Ascending aorta (tissue), 2 donors: ENCODE measurements at regions of chr7 and their contacts with region 1.

Region 1: DNA sequence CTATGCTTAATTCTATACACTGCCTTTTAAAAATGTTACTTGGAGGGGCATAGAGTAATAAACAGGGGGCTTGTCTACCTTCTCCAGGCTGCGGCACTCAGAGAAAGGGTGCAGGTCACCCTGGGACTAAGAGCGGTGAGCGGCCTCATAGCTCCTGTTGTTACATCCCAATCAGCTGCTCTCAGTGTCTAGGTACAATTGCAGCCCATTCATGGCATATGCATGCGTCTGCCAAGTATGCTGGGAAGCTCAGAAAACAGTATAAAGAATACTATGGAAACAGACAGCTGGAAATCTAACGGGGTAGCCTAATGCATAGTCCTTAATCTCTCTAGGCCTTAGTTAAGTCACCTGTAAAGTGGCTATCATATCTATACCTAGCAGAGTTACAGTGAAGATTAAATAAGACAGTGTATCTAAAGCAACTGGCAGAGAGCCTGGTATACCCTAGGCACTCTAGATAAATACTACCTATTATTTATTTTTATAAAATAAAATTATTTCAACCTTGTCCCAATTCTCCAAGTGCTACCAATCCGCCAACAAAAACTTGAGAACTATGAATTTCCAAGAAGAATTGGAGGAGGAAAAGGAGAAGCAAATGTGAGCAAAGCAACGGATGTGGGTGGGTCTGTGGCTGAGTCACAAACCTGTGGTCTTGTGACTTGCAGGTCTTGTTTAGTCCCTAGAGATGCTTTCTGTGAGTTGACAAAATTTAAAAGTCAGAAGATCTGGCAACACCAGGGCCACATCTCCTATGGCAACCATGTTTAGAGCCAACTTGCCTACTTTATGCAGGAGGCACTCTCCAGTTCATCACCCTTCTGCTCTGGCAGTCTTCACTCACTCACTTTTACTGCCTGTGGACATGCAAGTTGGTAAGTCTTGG is 183.0 kb downstream of the RAPGEF5 start:
- DNase-seq: no peak
- H3K4me3 ChIP-seq: no peak overlapping the region
- H3K27ac ChIP-seq: peak overlapping the region in 1 of 2 donors; percentile 68
- H3K4me1 ChIP-seq: peaks cover 0 to 12% of the 10 kb centered on the region in 2 donors
- H3K27me3 ChIP-seq: no peaks in the 10 kb centered on the region
- CTCF ChIP-seq: no peak

Region 2: GRCh38 chr7:22238354-22239311 is 64.7 kb after region 1 on chr7:
- intact Hi-C with region 1: loop called (anchors 10 kb)
- DNase-seq: no peak
- H3K4me3 ChIP-seq: no peak overlapping the region
- H3K27ac ChIP-seq: no peak overlapping the region
- H3K4me1 ChIP-seq: peaks cover 0 to 7% of the 10 kb centered on the region in 2 donors
- H3K27me3 ChIP-seq: no peaks in the 10 kb centered on the region
- CTCF ChIP-seq: no peak